Testis (tissue), 5 donors: ENCODE measurements at regions of chr10 and their contacts with region 1.

Region 1: GRCh38 chr10:132452631-132453469 is 55.9 kb downstream of the PWWP2B start:
- DNase-seq: peak; percentile 86
- H3K4me3 ChIP-seq: peak overlapping the region; percentile 15 to 38
- H3K27ac ChIP-seq: peak overlapping the region; percentile 55 to 66
- H3K4me1 ChIP-seq: peaks cover 24% of the 10 kb centered on the region
- H3K27me3 ChIP-seq: no peaks in the 10 kb centered on the region
- CTCF ChIP-seq: peak; percentile 97 to 98 (median 97)
- POLR2A ChIP-seq: no peak

Region 2: DNA sequence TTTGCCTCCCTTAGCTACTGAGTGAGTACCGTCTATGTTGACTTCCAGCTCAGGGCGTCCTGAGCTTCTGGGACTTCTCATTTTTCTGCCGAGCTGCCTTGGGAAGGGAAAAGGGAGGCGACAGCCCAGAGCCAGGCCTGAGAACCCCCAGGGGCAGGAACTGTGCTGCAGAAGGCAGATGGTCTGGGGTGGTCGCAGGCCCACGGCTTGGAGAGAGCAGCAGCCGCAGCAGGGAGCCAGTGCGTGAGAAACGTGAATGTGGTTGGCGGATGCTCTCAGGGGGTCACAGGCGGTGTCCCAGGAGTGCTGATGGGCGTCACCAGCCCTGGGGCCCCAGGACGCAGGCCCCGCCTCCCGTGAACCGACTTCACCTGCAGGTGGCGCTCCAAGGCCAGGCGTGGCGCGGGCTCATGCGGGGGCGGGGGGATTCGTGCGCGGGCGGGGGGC is 65.1 kb before region 1 on chr10:
- intact Hi-C with region 1: loop called (anchors 5 kb)
- DNase-seq: peak; percentile 81
- H3K4me3 ChIP-seq: no peak overlapping the region
- H3K27ac ChIP-seq: peak overlapping the region in 1 of 2 donors; percentile 82
- H3K4me1 ChIP-seq: peaks cover 10% of the 10 kb centered on the region
- H3K27me3 ChIP-seq: no peaks in the 10 kb centered on the region
- CTCF ChIP-seq: peak; percentile 64 to 82 (median 81)
- POLR2A ChIP-seq: no peak